ENCODE measurements at regions of chr10 and their contacts with region 1.

Region 1: DNA sequence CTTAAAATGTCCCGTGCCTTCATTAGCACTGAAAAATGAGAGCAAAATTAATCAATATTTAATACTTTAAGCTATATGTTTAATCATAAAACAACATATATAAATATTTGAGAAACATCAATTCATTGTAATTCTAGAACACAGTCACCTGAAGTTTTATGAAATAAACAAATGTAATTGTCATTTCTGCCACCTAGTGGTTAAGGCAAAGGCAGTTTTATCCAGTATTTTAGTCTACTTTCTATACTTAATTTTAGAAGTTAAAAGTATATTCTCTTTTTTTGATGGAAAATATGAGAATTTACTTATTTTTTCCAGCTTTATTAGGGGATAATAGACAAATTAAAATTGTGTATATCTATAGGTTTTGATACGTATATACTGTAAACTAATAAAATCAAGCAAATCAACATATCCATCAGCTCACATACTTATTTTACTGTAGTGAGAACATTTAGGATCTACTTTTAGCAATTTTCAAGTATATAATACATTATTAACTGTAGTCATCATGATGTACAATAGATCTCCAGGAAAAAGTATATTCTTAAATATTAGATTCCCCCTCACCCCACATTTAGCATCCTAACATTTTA is 16.9 kb downstream of the PCGF6 start:
- DNase-seq: no peak
- H3K4me3 Mint-ChIP-seq: no peak overlapping the region
- H3K27ac Mint-ChIP-seq: no peak overlapping the region
- H3K4me1 Mint-ChIP-seq: no peaks in the 10 kb centered on the region
- H3K27me3 Mint-ChIP-seq: no peaks in the 10 kb centered on the region

Region 2: GRCh38 chr10:103350501-103351260 is 16.7 kb after region 1 on chr10 and contains the start of gene PCGF6:
- CTCF ChIA-PET with region 1: interaction called, 10 read pairs
- POLR2A ChIA-PET with region 1: interaction called, 6 read pairs
- DNase-seq: peak; percentile 73
- H3K4me3 Mint-ChIP-seq: peak within 1 kb of the TSS; percentile 90
- H3K27ac Mint-ChIP-seq: peak within 1 kb of the TSS; percentile 84
- H3K4me1 Mint-ChIP-seq: peaks cover 12% of the 10 kb centered on the region
- H3K27me3 Mint-ChIP-seq: no peaks in the 10 kb centered on the region
- total RNA-seq, gene PCGF6: 13.9 to 15.1 TPM

Measured in activated CD4-positive, alpha-beta memory T cell treated with anti-CD3 and anti-CD28 coated beads, Interleukin-2, amount 10 ng/mL, durations not matched to agents 7 days and 5 days (primary cell).